A673 (cell line): ENCODE measurements at regions of chr12 and their contacts with region 1.

Region 1: GRCh38 chr12:80936498-80937390 is 990 bp downstream of the LIN7A start:
- DNase-seq: peak; percentile 64
- H3K4me3 ChIP-seq: peak overlapping the region; percentile 71
- H3K27ac ChIP-seq: peak overlapping the region; percentile 87
- H3K4me1 ChIP-seq: peaks cover 15% of the 10 kb centered on the region
- H3K27me3 ChIP-seq: no peaks in the 10 kb centered on the region
- CTCF ChIP-seq: no peak

Region 2: DNA sequence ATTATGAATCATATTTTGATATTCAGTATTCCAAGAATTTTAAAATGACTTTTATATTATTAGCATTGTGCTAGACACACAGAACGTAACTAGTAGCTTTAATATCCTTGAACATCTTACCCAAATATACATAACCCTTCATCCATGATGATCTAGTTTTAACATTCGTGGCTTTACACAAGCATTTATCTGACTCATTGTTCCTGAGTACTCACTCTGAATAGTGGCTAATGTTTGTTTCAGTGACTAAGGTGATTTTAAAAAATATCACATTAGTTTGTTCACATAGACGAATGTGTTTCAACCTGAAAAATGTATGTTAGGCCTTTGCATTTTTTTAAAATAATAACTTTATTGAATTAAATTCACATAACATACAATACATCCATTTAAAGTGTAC is 572.7 kb before region 1 on chr12:
- CTCF ChIA-PET with region 1: no interaction called
- POLR2A ChIA-PET with region 1: no interaction called
- intact Hi-C with region 1: no loop called
- DNase-seq: no peak
- H3K4me3 ChIP-seq: no peak overlapping the region
- H3K27ac ChIP-seq: no peak overlapping the region
- H3K4me1 ChIP-seq: no peaks in the 10 kb centered on the region
- H3K27me3 ChIP-seq: no peaks in the 10 kb centered on the region
- CTCF ChIP-seq: no peak

Region 3: DNA sequence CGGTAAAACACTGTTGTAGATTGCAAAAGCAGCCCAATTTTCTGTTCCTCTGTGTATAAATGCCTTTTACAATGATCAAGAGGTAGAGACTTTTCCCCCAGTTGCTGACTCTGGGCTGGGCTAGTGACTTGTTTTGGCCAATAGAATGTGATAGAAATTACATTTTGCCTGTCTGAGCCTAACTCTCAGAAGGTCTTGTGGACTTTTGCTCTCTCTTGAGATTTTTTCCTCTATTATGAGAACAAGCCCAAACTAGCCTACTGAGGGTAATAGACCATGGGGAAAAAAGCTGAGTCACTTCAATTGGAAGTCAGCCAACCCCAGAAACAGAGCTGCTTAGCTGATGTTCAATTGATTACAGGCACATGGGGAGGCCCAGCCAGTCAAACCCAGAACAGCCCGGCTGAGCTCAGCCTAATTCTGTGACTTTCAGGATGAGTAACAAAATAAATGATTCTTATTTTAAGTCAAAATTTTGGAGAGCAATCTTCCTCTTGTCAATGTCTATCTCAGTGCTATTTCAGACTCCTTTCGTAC is 158.7 kb before region 1 on chr12:
- CTCF ChIA-PET with region 1: no interaction called
- POLR2A ChIA-PET with region 1: no interaction called
- intact Hi-C with region 1: loop called (anchors 10 kb)
- DNase-seq: peak; percentile 92
- H3K4me3 ChIP-seq: no peak overlapping the region
- H3K27ac ChIP-seq: peak overlapping the region; percentile 83
- H3K4me1 ChIP-seq: peaks cover 14% of the 10 kb centered on the region
- H3K27me3 ChIP-seq: no peaks in the 10 kb centered on the region
- CTCF ChIP-seq: no peak

Region 4: DNA sequence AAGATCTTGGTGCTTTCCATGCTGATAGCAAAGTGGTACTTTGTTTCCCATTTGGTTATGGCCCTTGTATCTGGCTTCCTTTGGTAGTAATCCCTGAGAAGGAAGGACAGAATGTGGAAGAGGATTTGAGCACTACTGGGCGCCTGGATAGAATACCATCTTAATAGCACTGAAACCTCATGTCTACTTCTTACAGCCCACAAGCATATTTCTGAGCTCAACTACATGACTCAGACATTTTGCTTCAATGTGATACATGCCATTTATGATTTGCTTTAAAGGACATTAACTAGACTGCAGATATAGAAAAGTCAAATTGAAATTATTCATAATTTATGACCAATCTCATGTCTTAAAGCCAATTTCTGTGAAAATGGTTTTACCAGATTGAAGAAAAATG is 79.4 kb before region 1 on chr12:
- CTCF ChIA-PET with region 1: no interaction called
- POLR2A ChIA-PET with region 1: no interaction called
- intact Hi-C with region 1: loop called (anchors 5 kb)
- DNase-seq: no peak
- H3K4me3 ChIP-seq: no peak overlapping the region
- H3K27ac ChIP-seq: peak overlapping the region; percentile 42
- H3K4me1 ChIP-seq: peaks cover 23% of the 10 kb centered on the region
- H3K27me3 ChIP-seq: no peaks in the 10 kb centered on the region
- CTCF ChIP-seq: no peak